Caco-2 (cell line): ENCODE measurements at regions of chr1 and their contacts with region 1.

Region 1: DNA sequence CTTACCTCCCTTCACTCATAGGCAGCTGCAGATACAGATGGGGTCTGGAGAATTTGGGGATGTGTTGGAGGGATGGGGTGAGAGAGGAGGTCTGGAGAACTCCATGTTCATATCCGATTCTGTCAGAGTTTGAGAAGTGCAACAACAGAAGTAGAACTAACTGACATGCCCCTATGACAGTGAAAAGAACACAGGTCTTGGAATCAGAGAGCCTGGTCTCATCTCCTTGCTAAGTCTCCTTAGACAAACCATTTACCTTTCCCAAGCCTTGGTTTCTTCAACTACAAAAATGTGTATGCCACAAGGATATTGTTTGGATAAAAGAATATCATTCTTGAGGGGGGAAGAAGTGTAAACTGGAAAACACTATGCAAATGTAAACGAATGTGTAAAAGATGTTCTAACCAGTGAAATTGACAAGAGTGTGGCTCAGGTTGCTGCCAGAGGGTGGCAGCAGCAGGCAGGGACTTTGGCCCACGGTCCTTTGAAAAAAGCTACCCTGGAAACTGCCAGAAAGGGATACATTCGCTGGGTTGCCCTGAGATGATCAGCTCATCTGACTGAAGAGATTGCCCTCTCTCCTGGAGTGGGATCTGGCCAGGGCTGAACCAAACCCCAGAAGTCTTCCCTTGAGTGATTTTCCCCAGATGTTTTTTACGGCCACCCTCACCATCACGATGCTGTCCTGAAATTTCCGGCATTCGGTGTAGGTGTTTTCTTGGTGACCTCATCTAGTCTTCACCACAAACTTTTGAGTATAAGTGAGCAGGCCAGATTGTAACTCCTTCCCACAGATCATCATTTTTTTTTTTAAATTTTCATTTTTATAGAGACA is 17.0 kb upstream of the CD2 start:
- DNase-seq: peak in 1 of 2 experiments; percentile 50
- H3K4me3 ChIP-seq: no peak overlapping the region
- H3K4me3 Mint-ChIP-seq: no peak overlapping the region
- H3K27ac Mint-ChIP-seq: no peak overlapping the region
- H3K4me1 ChIP-seq: no peaks in the 10 kb centered on the region
- H3K4me1 Mint-ChIP-seq: no peaks in the 10 kb centered on the region
- H3K27me3 ChIP-seq: no peaks in the 10 kb centered on the region
- H3K27me3 Mint-ChIP-seq: no peaks in the 10 kb centered on the region
- CTCF ChIP-seq: peak; percentile 57 to 71

Region 2: DNA sequence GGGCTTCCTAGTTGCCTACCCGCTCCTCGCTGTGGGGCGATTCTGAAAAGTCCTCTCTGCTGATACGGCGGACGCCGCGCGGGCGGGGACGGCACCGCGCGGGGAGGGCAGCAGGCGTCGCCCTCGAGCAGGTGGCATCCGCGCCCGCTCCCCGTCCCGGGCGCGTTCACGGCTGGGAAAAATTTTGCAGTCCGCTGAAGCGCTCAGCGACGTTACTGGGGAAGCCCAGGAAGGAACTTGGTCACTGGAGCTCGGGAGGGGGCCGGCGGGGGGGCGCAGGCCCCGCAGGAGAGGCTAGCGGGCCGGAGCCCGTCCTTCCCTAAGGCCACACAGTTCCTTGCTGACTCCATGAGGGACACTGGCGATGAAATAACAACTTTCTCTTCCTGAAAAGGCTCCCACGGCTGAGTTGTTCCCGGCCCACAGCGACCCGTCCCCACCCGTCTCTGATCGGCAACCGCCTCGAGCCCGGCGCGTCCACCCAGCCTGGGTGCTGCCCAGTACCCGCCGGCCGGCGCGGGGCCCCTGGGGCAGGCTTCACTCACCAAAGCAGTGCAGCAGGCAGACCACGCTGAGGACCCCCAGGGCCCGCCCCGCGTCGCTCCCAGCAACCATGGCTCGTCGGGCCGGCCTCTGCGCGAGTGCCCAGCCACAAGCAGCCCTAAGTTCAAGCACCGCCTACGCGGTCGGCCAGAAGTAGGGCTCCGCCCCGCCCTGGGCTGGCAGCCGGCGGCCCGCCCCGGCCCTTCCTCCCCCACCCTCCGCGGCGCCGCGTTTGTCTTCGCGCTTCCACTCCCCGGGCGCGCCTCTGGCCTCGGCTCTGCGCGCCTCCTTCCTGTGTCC is 166.7 kb before region 1 on chr1 and contains the start of gene CD58:
- CTCF ChIA-PET with region 1: interaction called, 3 read pairs
- POLR2A ChIA-PET with region 1: no interaction called
- intact Hi-C with region 1: loop called (anchors 5 kb)
- DNase-seq: peak; percentile 79 to 81
- H3K4me3 ChIP-seq: peak within 1 kb of the TSS; percentile 72
- H3K4me3 Mint-ChIP-seq: peak within 1 kb of the TSS; percentile 72
- H3K27ac Mint-ChIP-seq: peak within 1 kb of the TSS; percentile 66
- H3K4me1 ChIP-seq: peaks cover 11% of the 10 kb centered on the region; the same call in 1 of the 2 replicates
- H3K4me1 Mint-ChIP-seq: peaks cover 7% of the 10 kb centered on the region
- H3K27me3 ChIP-seq: no peaks in the 10 kb centered on the region
- H3K27me3 Mint-ChIP-seq: no peaks in the 10 kb centered on the region
- CTCF ChIP-seq: peak; percentile 52 to 57
- total RNA-seq, gene CD58: 5.6 and 7.6 TPM in 2 replicates

Region 3: DNA sequence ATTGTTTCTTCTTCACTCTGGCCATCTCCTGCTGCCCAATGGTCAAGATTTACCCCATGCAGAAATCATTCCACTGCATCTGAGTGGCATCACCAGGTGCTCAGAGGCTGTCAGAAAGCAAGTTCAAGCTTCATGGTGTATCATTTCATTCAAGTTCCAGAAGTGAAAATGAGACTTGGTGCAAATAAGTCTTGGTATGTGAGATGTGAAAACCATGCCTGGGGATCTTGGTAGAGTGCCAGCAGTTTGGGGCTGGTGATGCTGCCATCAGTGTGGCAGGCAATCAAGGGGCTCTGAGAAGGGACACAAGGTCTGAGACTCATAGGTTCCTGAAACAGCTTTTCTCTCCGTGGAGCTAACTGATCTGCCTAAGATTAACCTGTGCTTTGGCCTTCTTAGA is 69.0 kb after region 1 on chr1:
- CTCF ChIA-PET with region 1: no interaction called
- POLR2A ChIA-PET with region 1: no interaction called
- intact Hi-C with region 1: no loop called
- DNase-seq: no peak
- H3K4me3 ChIP-seq: no peak overlapping the region
- H3K4me3 Mint-ChIP-seq: no peak overlapping the region
- H3K27ac Mint-ChIP-seq: no peak overlapping the region
- H3K4me1 ChIP-seq: no peaks in the 10 kb centered on the region
- H3K4me1 Mint-ChIP-seq: no peaks in the 10 kb centered on the region
- H3K27me3 ChIP-seq: no peaks in the 10 kb centered on the region
- H3K27me3 Mint-ChIP-seq: no peaks in the 10 kb centered on the region
- CTCF ChIP-seq: no peak

Region 4: DNA sequence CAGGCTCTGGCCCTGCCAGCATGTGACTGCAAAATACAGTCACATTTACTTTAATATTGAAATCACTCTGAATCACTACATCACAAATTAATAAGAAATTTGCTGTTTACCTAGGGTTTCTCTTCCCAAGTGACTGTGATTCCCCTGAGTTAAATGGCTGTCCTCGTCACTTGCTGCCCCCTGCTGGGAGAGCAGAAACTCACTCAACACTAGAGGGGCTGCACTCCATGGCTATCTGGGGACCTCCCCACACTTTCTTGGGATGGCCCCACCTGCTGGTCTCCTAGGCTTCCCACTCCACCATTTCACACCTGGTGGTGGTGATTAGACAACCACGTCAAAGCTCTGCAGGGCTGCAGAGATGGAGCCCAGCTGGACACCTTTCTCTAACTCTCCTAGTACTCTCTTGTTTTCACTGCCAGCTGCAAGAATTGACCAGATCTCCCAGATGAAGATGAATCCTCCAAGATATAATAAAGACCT is 80.4 kb after region 1 on chr1:
- CTCF ChIA-PET with region 1: no interaction called
- POLR2A ChIA-PET with region 1: no interaction called
- intact Hi-C with region 1: loop called (anchors 1 kb)
- DNase-seq: peak; percentile 71 to 74
- H3K4me3 ChIP-seq: no peak overlapping the region
- H3K4me3 Mint-ChIP-seq: no peak overlapping the region
- H3K27ac Mint-ChIP-seq: no peak overlapping the region
- H3K4me1 ChIP-seq: no peaks in the 10 kb centered on the region
- H3K4me1 Mint-ChIP-seq: no peaks in the 10 kb centered on the region
- H3K27me3 ChIP-seq: no peaks in the 10 kb centered on the region
- H3K27me3 Mint-ChIP-seq: no peaks in the 10 kb centered on the region
- CTCF ChIP-seq: peak; percentile 53 to 59

Region 5: DNA sequence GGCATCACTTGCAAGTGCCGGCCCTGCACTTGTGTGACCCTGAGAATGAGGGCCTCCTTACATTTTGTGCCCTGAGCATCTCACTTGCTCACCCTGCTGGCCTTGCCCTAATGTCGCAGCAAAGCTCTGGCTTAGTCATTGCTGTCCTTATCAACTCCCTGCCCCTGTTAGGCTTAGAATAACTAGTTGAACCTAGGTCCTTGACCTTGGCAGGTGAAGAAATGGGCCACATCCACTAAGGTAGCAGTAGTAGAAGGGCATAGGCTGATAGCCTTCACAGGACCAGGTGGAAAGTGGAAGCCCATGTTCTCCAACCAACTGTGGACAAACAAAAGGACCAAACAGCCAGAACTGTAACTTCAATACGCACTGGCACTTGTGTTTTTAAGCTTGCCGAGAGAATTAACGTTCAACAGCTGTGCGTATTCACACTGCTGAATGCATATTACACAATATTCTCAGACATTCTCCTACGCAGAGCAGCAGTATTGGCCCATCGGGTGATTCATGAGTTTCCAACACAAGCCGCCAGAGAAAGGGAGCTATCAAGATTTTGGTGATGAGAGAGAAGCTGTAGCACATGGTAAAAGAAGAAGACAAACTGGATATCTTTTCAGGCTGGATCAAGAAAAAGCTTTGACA is 144.8 kb after region 1 on chr1:
- CTCF ChIA-PET with region 1: interaction called, 3 read pairs
- POLR2A ChIA-PET with region 1: no interaction called
- intact Hi-C with region 1: loop called (anchors 1 kb)
- DNase-seq: peak; percentile 35 to 42
- H3K4me3 ChIP-seq: no peak overlapping the region
- H3K4me3 Mint-ChIP-seq: no peak overlapping the region
- H3K27ac Mint-ChIP-seq: no peak overlapping the region
- H3K4me1 ChIP-seq: peaks cover 3% of the 10 kb centered on the region; the same call in 1 of the 2 replicates
- H3K4me1 Mint-ChIP-seq: no peaks in the 10 kb centered on the region
- H3K27me3 ChIP-seq: no peaks in the 10 kb centered on the region
- H3K27me3 Mint-ChIP-seq: no peaks in the 10 kb centered on the region
- CTCF ChIP-seq: peak; percentile 23 to 35

Region 6: GRCh38 chr1:116987256-116987555 is 250.0 kb after region 1 on chr1:
- CTCF ChIA-PET with region 1: interaction called, 12 read pairs
- POLR2A ChIA-PET with region 1: no interaction called
- intact Hi-C with region 1: no loop called
- DNase-seq: peak; percentile 62 to 68
- H3K4me3 ChIP-seq: peak overlapping the region; percentile 40
- H3K4me3 Mint-ChIP-seq: peak overlapping the region; percentile 98
- H3K27ac Mint-ChIP-seq: peak overlapping the region; percentile 97
- H3K4me1 ChIP-seq: peaks cover 15% of the 10 kb centered on the region
- H3K4me1 Mint-ChIP-seq: peaks cover 6% of the 10 kb centered on the region
- H3K27me3 ChIP-seq: no peaks in the 10 kb centered on the region
- H3K27me3 Mint-ChIP-seq: no peaks in the 10 kb centered on the region
- CTCF ChIP-seq: no peak